Endothelial cell of umbilical vein (primary cell): ENCODE measurements at regions of chr7 and their contacts with region 1.

Region 1: DNA sequence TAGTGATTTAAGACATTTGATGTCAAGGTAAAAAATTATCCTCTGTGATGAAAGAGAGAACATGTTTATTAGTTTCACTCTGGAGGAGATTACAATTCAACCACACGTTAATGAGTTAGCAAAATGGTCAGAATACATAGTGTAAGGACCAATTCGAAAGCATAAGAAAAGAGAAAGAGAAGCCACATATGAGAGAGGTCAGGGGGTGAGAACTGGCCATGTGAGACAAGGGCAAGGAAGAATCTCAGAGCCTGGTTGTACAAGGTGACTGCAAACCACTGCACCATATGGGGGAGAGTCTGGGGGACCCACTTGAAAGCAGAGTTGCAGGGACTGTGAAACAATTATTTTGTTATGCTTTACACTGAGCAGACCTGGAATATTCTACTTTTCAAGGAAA is 27.7 kb upstream of the BET1 start:
- DNase-seq: no peak
- H3K4me3 ChIP-seq: no peak overlapping the region
- H3K27ac ChIP-seq: no peak overlapping the region
- H3K4me1 ChIP-seq: peaks cover 4% of the 10 kb centered on the region
- H3K27me3 ChIP-seq: peaks cover 24 to 34% of the 10 kb centered on the region in 2 experiments
- CTCF ChIP-seq: no peak
- POLR2A ChIP-seq: no peak

Region 2: GRCh38 chr7:94012746-94013145 is 19.1 kb before region 1 on chr7:
- CTCF ChIA-PET with region 1: interaction called, 3 read pairs
- POLR2A ChIA-PET with region 1: no interaction called
- dilution Hi-C with region 1: no loop called
- intact Hi-C with region 1: loop called (anchors 2 kb)
- DNase-seq: no peak
- H3K4me3 ChIP-seq: no peak overlapping the region
- H3K27ac ChIP-seq: no peak overlapping the region
- H3K4me1 ChIP-seq: no peaks in the 10 kb centered on the region
- H3K27me3 ChIP-seq: peaks cover 3 to 9% of the 10 kb centered on the region in 2 experiments
- CTCF ChIP-seq: no peak
- POLR2A ChIP-seq: no peak